ENCODE measurements at regions of chr1 and their contacts with region 1.

Region 1: DNA sequence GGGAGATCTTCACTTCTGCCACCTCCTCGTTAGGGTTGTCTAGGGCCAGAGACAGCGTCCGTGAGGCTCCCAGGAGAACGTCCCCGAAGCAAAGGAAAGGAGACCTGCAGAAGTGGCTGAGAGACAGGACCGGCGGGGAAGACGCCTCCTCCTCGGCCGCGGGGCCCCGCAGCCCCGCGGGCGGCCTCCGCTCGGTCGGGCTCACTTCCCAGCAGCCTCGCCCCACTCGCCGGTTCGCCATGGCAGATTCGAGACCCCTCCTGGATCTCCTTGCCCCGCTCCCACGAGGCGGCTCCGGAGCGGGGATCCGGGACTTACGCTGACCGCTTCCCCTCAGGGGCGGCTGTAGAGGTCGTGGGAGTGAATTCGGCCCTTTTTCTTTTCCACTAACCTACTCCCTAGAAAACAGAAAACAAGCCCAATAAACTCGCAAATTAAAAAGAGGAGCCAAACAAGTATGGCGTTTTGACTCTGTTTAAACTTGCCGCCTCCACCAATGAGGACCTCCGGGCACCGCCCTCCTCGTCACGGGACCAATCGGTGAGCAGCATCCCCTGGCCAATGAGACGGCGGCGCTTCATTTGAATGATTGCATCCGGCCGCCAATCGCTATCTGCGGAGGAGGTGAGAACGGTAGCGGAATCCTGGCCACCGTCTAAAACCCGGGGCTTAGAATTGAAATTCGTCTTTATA is at the start of gene ASPM:
- DNase-seq: peak; percentile 98
- H3K4me3 Mint-ChIP-seq: peak within 1 kb of the TSS; percentile 96
- H3K27ac Mint-ChIP-seq: peak within 1 kb of the TSS; percentile 95
- H3K4me1 Mint-ChIP-seq: peaks cover 30% of the 10 kb centered on the region
- H3K27me3 Mint-ChIP-seq: no peaks in the 10 kb centered on the region
- total RNA-seq, gene ASPM: 29.1 TPM in 2 replicates

Region 2: GRCh38 chr1:196970193-196970592 is 176.2 kb before region 1 on chr1:
- intact Hi-C with region 1: no loop called
- DNase-seq: no peak
- H3K4me3 Mint-ChIP-seq: no peak overlapping the region
- H3K27ac Mint-ChIP-seq: no peak overlapping the region
- H3K4me1 Mint-ChIP-seq: no peaks in the 10 kb centered on the region
- H3K27me3 Mint-ChIP-seq: no peaks in the 10 kb centered on the region

Region 3: GRCh38 chr1:197106869-197107268 is 39.5 kb before region 1 on chr1:
- intact Hi-C with region 1: loop called (anchors 5 kb)
- DNase-seq: no peak
- H3K4me3 Mint-ChIP-seq: no peak overlapping the region
- H3K27ac Mint-ChIP-seq: no peak overlapping the region
- H3K4me1 Mint-ChIP-seq: peaks cover 23% of the 10 kb centered on the region
- H3K27me3 Mint-ChIP-seq: no peaks in the 10 kb centered on the region